ENCODE measurements at regions of chr12 and their contacts with region 1.

Region 1: DNA sequence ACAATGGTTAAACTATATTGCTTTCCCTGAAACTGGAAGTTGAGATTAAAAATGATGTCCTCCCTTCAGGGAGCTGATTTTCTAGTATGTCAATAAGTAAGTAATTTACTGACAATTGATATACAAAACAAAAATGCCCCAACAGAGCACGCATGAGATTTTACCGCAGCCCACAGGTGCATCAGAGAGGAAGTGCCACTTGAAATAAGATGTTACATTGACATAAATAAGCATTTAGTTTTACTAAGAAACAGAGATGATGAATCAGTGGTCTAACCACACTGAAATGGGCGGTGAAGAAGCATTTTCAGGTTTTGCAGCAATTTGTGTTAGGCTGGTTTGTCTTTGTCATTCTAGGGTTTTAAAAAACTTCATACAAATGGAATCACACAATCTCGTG is 8.8 kb upstream of the CLECL1 start:
- DNase-seq: peak; percentile 88
- ATAC-seq: peak; percentile 80
- H3K4me3 Mint-ChIP-seq: peak overlapping the region; percentile 67
- H3K27ac Mint-ChIP-seq: peak overlapping the region; percentile 79
- H3K4me1 Mint-ChIP-seq: peaks cover 72% of the 10 kb centered on the region
- H3K27me3 Mint-ChIP-seq: no peaks in the 10 kb centered on the region

Region 2: GRCh38 chr12:9331218-9331626 is 410.5 kb before region 1 on chr12:
- CTCF ChIA-PET with region 1: interaction called, 8 read pairs
- POLR2A ChIA-PET with region 1: no interaction called
- intact Hi-C with region 1: loop called in 1 of 2 experiments (anchors 5 kb)
- DNase-seq: peak; percentile 83
- ATAC-seq: peak; percentile 84
- H3K4me3 Mint-ChIP-seq: no peak overlapping the region
- H3K27ac Mint-ChIP-seq: no peak overlapping the region
- H3K4me1 Mint-ChIP-seq: peaks cover 19% of the 10 kb centered on the region
- H3K27me3 Mint-ChIP-seq: no peaks in the 10 kb centered on the region

Region 3: DNA sequence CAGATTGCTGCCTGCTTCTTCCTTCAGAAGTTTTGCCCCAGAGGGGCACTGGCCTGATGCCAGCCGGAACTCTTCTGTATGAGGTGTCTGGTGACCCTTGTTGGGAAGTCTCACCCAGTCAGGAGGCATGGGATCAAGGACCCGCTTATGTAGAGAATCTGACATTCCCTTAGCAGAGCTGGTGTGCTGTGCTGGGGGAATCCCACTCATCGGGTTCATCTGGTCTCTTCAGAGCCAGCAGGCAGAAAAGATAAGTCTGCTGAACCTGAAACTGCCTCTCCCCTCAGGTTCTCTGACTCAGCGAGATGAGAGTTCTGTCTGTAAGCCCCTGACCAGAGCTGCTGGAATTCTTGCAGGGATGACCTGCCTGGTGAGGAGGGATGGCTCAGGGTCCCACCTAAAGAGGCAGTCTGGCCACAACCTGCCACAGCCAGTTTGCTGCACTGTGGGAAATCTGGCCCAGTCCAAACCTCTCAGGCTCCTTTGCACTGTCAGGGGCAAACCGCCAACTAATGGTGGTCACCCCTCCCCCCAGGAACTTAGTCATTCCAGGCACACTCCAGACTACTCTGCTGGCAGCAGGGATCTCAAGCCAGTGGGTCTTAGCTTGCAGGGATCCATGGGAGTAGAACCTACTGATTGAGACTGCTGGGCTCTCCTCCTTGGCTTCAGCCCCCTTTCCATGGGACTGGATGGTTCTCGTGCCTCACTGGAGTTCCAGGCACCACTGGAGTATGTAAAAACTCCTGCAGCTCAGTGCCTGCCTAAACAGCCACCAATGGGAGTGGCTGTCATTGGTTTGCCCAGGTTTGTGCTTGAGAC is 68.1 kb before region 1 on chr12:
- CTCF ChIA-PET with region 1: interaction called, 10 read pairs
- POLR2A ChIA-PET with region 1: interaction called, 13 read pairs
- intact Hi-C with region 1: loop called (anchors 1 kb)
- DNase-seq: peak; percentile 89
- ATAC-seq: peak; percentile 47
- H3K4me3 Mint-ChIP-seq: peak overlapping the region; percentile 93
- H3K27ac Mint-ChIP-seq: peak overlapping the region; percentile 99
- H3K4me1 Mint-ChIP-seq: peaks cover 47% of the 10 kb centered on the region
- H3K27me3 Mint-ChIP-seq: no peaks in the 10 kb centered on the region

Region 4: DNA sequence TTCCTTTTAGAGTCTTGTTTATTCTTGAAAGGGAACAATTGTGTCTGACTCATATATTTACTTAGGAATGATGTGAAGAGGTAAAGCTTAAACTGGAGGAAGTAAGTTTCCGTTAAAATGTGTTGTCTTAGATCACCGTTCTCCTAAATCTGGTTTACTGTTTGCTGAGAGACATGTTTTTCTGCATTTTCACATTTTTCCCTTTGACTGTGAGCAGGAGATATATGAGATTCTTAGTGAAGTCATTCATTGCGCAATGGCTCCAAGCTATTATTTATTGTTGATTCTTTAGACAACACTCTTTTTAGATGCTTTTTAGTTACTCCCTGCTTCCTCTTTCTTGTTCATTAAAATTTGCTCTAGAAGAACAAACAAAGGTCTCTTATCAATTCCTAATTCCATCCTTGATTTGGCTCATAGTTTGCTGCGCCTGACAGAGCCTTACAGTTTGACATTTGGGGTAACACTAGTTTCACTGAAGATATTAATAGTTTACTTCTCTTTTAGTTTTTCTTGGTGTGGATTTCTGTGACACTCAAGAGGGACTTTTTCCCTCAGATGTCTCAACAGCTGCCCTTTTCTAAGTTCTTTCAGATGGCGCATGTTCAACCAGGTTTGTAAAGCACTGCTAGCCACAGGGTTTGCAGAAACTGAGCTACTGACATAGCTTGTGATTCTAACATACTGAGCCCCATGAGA is 20.2 kb before region 1 on chr12:
- CTCF ChIA-PET with region 1: interaction called, 12 read pairs
- POLR2A ChIA-PET with region 1: no interaction called
- intact Hi-C with region 1: no loop called
- DNase-seq: no peak
- ATAC-seq: no peak
- H3K4me3 Mint-ChIP-seq: no peak overlapping the region
- H3K27ac Mint-ChIP-seq: no peak overlapping the region
- H3K4me1 Mint-ChIP-seq: peaks cover 28% of the 10 kb centered on the region
- H3K27me3 Mint-ChIP-seq: no peaks in the 10 kb centered on the region

Region 5: GRCh38 chr12:9869307-9870161 is 127.8 kb after region 1 on chr12 and contains the start of gene CLEC2B:
- CTCF ChIA-PET with region 1: interaction called, 5 read pairs
- POLR2A ChIA-PET with region 1: interaction called, 3 read pairs
- intact Hi-C with region 1: loop called in 1 of 2 experiments (anchors 2 kb)
- DNase-seq: peak; percentile 59
- ATAC-seq: peak; percentile 69
- H3K4me3 Mint-ChIP-seq: peak within 1 kb of the TSS; percentile 77
- H3K27ac Mint-ChIP-seq: peak within 1 kb of the TSS; percentile 95
- H3K4me1 Mint-ChIP-seq: peaks cover 23% of the 10 kb centered on the region
- H3K27me3 Mint-ChIP-seq: no peaks in the 10 kb centered on the region
- total RNA-seq, gene CLEC2B: 21.8 to 25.8 TPM

Region 6: GRCh38 chr12:10001171-10001776 is 259.5 kb after region 1 on chr12:
- CTCF ChIA-PET with region 1: no interaction called
- POLR2A ChIA-PET with region 1: no interaction called
- intact Hi-C with region 1: loop called in 1 of 2 experiments (anchors 5 kb)
- DNase-seq: no peak
- ATAC-seq: no peak
- H3K4me3 Mint-ChIP-seq: no peak overlapping the region
- H3K27ac Mint-ChIP-seq: no peak overlapping the region
- H3K4me1 Mint-ChIP-seq: no peaks in the 10 kb centered on the region
- H3K27me3 Mint-ChIP-seq: no peaks in the 10 kb centered on the region

Region 7: GRCh38 chr12:10182354-10183061 is 440.8 kb after region 1 on chr12:
- CTCF ChIA-PET with region 1: no interaction called
- POLR2A ChIA-PET with region 1: no interaction called
- intact Hi-C with region 1: no loop called
- DNase-seq: no peak
- ATAC-seq: peak; percentile 51
- H3K4me3 Mint-ChIP-seq: no peak overlapping the region
- H3K27ac Mint-ChIP-seq: no peak overlapping the region
- H3K4me1 Mint-ChIP-seq: no peaks in the 10 kb centered on the region
- H3K27me3 Mint-ChIP-seq: peaks cover 19% of the 10 kb centered on the region

Region 8: GRCh38 chr12:10304161-10304574 is 562.4 kb after region 1 on chr12:
- CTCF ChIA-PET with region 1: no interaction called
- POLR2A ChIA-PET with region 1: no interaction called
- intact Hi-C with region 1: loop called in 1 of 2 experiments (anchors 1 kb)
- DNase-seq: peak; percentile 64
- ATAC-seq: peak; percentile 86
- H3K4me3 Mint-ChIP-seq: no peak overlapping the region
- H3K27ac Mint-ChIP-seq: peak overlapping the region; percentile 19
- H3K4me1 Mint-ChIP-seq: peaks cover 47% of the 10 kb centered on the region
- H3K27me3 Mint-ChIP-seq: peaks cover 21% of the 10 kb centered on the region